WTC11 (cell line): ENCODE measurements at regions of chr2 and their contacts with region 1.

Region 1: DNA sequence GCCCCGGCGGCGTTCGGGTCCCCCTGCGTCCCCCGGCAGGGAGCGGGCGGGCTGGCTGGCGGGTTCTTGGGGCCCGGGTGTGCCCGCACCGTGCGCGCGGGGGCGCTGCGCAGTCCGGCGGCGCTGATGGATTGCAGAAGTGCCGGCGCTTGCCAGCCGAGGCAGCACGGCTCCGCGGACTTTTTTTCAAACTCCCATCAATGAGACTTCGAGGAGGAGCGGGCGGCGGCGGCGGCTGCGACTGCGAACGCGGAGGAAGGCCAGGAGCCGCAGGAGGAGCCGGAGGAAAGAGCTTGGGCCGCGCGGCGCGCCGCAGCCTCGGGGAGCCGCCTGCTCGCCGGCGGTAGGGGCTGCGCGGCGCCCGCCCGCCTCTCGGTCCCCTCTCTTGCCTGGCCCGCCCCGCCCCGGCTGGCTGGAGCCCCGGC is at the start of gene GLI2:
- DNase-seq: peak; percentile 87
- ATAC-seq: peak; percentile 52
- H3K4me3 Mint-ChIP-seq: peak within 1 kb of the TSS; percentile 88
- H3K27ac Mint-ChIP-seq: no peak within 1 kb of the TSS
- H3K4me1 Mint-ChIP-seq: peaks cover 43% of the 10 kb centered on the region
- H3K27me3 Mint-ChIP-seq: no peaks in the 10 kb centered on the region
- CTCF ChIP-seq: peak; percentile 50; the same call in 1 of the 2 replicates
- total RNA-seq, gene GLI2: 45.9 to 60.9 TPM (median 48.6 TPM) in 3 replicates

Region 2: GRCh38 chr2:120712180-120712681 is 23.5 kb before region 1 on chr2:
- CTCF ChIA-PET with region 1: interaction called, 15 read pairs
- POLR2A ChIA-PET with region 1: interaction called, 3 read pairs
- DNase-seq: no peak
- ATAC-seq: no peak
- H3K4me3 Mint-ChIP-seq: no peak overlapping the region
- H3K27ac Mint-ChIP-seq: no peak overlapping the region
- H3K4me1 Mint-ChIP-seq: peaks cover 71% of the 10 kb centered on the region
- H3K27me3 Mint-ChIP-seq: peaks cover 67% of the 10 kb centered on the region
- CTCF ChIP-seq: no peak

Region 3: GRCh38 chr2:120751553-120751952 is 15.8 kb after region 1 on chr2:
- CTCF ChIA-PET with region 1: no interaction called
- POLR2A ChIA-PET with region 1: no interaction called
- DNase-seq: no peak
- ATAC-seq: no peak
- H3K4me3 Mint-ChIP-seq: no peak overlapping the region
- H3K27ac Mint-ChIP-seq: 0 out of 2 replicates have a peak overlapping the region, but pooled peaks have one; percentile 3
- H3K4me1 Mint-ChIP-seq: peaks cover 62% of the 10 kb centered on the region
- H3K27me3 Mint-ChIP-seq: no peaks in the 10 kb centered on the region
- CTCF ChIP-seq: no peak

Region 4: GRCh38 chr2:120787111-120787821 is 51.5 kb after region 1 on chr2:
- CTCF ChIA-PET with region 1: interaction called, 15 read pairs
- POLR2A ChIA-PET with region 1: interaction called, 3 read pairs
- DNase-seq: no peak
- ATAC-seq: no peak
- H3K4me3 Mint-ChIP-seq: peak overlapping the region; percentile 50
- H3K27ac Mint-ChIP-seq: peak overlapping the region; percentile 89
- H3K4me1 Mint-ChIP-seq: peaks cover 98% of the 10 kb centered on the region
- H3K27me3 Mint-ChIP-seq: no peaks in the 10 kb centered on the region
- CTCF ChIP-seq: no peak

Region 5: GRCh38 chr2:120833127-120833675 is 97.4 kb after region 1 on chr2:
- CTCF ChIA-PET with region 1: interaction called, 13 read pairs
- POLR2A ChIA-PET with region 1: no interaction called
- DNase-seq: peak; percentile 39
- ATAC-seq: peak; percentile 67
- H3K4me3 Mint-ChIP-seq: no peak overlapping the region
- H3K27ac Mint-ChIP-seq: peak overlapping the region; percentile 89
- H3K4me1 Mint-ChIP-seq: peaks cover 32% of the 10 kb centered on the region
- H3K27me3 Mint-ChIP-seq: no peaks in the 10 kb centered on the region
- CTCF ChIP-seq: no peak

Region 6: GRCh38 chr2:120885320-120885719 is 149.6 kb after region 1 on chr2:
- CTCF ChIA-PET with region 1: interaction called, 10 read pairs
- POLR2A ChIA-PET with region 1: no interaction called
- DNase-seq: no peak
- ATAC-seq: peak; percentile 29
- H3K4me3 Mint-ChIP-seq: no peak overlapping the region
- H3K27ac Mint-ChIP-seq: peak overlapping the region; percentile 56; the same call in 1 of the 2 replicates
- H3K4me1 Mint-ChIP-seq: peaks cover 50% of the 10 kb centered on the region
- H3K27me3 Mint-ChIP-seq: no peaks in the 10 kb centered on the region
- CTCF ChIP-seq: no peak